ENCODE measurements at regions of chr4 and their contacts with region 1.

Region 1: DNA sequence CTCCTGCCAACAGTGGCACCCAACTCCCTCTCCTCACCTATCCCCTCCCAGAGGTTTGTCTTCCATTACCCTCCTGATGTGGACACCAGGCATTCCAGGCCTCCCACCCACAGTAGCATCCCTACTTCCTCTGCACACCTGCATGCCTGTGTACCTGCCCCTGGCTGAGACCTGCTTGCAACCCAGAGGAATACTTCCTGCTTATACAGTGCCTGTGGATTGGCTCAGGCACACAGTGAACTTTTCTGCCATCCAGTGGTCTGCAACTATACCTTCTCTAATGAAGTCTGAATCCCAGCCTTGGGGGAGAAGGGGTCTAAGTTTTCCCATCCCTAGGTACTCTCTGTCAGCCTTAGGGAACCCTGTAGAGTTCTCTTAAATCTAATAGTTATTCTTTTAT is 169.9 kb downstream of the IQCM start:
- DNase-seq: no peak

Region 2: DNA sequence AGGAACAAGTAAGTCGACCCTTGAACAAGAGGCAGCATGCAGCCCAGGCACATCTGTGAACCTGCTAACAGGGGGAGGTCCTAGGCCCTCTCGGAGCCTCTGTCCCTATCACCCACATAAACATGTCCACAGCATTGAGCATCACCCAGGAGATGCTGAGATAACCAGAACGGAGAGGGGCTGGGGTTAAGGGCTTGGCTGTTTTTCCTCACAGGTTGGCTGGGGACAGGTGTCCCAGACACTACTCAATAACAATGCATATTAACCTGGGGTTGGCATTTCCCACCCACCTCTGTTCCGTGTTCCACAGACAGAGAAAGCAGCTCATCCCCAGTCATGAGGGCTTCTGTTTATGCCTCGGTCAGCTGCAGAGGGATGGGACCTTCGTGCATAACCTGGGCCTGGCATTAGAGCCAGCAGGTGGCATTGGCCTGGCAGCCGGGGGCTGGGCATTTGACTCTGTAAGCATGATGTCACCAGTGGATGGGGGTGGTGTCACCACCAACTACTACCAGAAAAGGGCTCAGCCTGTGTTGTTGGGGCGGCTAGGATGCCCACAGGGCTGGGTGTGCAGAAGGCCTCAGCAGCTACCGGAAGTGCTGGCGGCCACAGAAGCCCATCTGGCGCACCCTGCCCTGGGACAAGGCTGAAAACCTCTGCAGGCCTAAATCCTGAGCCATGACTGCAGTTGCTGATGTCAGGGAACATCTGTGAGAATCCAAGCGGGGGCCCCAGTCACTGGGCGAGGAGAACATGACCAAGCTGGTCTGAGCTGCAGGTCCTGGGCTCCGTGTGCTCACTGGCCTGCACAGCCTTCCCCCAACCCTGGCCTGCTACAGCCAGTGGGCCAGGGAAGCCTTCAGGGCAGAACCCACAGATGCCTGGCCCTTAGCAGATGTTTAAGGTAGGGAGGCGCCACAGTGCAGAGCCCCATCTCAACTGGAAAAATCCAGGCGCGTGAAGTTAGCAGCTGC is 1555.0 kb before region 1 on chr4:
- intact Hi-C with region 1: loop called in 1 of 2 experiments (anchors 5 kb)
- DNase-seq: peak; percentile 75

Region 3: DNA sequence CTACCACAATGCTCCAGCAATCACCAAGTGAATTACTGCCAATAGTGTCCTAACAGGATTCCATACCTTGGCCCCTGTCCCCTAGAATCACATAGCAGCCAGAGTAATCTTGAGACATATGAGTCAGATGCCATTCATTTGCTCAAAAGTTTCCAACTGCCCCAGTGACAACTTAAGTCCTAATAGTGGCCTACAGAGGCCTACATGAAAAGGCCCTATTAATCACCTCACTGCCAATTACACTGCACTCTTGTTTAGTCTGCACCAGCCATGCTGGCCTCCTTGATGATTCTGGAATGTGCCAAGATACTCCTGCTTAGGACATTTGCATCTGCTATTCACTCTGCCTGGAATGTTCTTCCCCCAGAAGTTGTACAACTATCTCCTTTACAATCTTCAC is 1334.3 kb before region 1 on chr4:
- intact Hi-C with region 1: loop called in 1 of 2 experiments (anchors 5 kb)
- DNase-seq: no peak

Region 4: GRCh38 chr4:149344436-149344835 is 301.4 kb before region 1 on chr4:
- intact Hi-C with region 1: no loop called
- DNase-seq: no peak

Region 5: GRCh38 chr4:149595500-149595899 is 50.3 kb before region 1 on chr4:
- intact Hi-C with region 1: no loop called
- DNase-seq: no peak

Region 6: DNA sequence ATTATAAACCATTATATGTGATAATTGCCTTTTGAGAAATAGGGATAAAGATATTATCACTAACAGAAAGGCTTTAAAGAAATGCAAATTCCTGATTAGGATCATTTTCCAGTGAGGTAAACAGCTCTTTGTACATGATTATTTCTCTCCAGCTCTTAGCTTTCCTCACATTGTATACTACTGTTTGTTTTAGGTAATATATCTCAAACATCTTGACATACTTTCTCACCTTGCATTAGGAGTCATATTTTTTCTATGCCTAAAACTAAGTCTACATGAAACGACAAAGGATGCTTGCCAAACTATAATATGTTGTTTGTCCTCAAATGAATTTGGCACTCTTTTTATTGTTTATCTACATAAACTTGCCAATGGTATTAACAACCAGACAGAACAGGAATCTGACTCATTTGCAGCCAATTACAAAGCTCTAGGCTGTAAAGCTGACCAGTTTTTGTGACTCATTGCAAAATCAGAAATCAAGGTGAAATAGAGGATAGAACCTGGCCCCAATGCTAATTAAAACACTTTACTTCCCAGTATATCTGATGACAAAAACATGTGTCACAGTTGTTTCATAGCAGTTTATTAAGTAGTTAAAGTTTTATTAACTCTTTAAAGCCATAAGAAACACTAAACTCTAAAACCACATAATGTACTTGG is 62.9 kb after region 1 on chr4:
- intact Hi-C with region 1: no loop called
- DNase-seq: no peak